Tibial artery (tissue), 4 donors: ENCODE measurements at regions of chr17 and their contacts with region 1.

Region 1: DNA sequence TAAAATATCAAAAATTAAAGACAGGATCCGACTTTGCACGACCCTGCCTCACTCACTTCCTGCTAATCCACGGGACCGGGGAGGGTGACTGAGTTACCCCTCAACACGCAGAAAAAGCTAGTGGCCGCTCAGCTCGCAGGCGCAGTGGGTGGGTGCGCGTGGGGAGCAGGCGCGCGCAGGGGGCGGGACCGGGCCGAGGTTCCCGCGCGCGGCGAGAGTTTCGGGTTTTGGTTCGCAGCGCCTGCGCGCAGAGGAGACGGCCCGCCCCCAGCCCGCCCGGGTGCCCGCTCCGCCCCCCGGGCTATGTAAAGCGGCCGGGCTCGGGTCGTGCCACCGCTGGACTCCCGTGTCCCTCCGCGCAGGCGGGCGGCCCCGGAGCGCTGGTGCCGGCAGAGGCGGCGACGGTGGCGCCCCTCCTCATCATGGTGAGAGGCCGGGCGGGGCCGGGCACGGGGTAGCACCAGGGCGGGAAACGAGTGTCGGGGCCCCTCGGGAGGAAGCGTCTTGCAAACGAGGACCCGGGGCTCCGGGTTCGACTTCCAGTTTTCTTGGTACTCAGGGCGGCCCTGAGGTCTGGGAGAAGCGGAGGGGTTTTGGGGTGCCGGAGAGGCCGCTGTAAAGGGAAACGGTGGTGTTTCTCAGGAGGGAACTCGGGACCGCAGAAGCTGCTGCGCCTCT is at the start of gene CNP:
- DNase-seq: peak; percentile 92 to 97
- H3K4me3 ChIP-seq: peak within 1 kb of the TSS; percentile 70 to 90
- H3K27ac ChIP-seq: peak within 1 kb of the TSS; percentile 87 to 93
- H3K4me1 ChIP-seq: peaks cover 0 to 49% (median 28%) of the 10 kb centered on the region in 4 donors
- H3K27me3 ChIP-seq: no peaks in the 10 kb centered on the region
- CTCF ChIP-seq: no peak

Region 2: GRCh38 chr17:42019509-42020404 is 53.2 kb after region 1 on chr17 and contains the start of gene NKIRAS2:
- intact Hi-C with region 1: loop called (anchors 5 kb)
- DNase-seq: peak; percentile 94 to 97
- H3K4me3 ChIP-seq: peak within 1 kb of the TSS; percentile 73 to 78
- H3K27ac ChIP-seq: peak within 1 kb of the TSS; percentile 80 to 86
- H3K4me1 ChIP-seq: peaks cover 0 to 42% (median 37%) of the 10 kb centered on the region in 4 donors
- H3K27me3 ChIP-seq: no peaks in the 10 kb centered on the region
- CTCF ChIP-seq: peak; percentile 93 to 95